ENCODE measurements at regions of chr11 and their contacts with region 1.

Region 1: DNA sequence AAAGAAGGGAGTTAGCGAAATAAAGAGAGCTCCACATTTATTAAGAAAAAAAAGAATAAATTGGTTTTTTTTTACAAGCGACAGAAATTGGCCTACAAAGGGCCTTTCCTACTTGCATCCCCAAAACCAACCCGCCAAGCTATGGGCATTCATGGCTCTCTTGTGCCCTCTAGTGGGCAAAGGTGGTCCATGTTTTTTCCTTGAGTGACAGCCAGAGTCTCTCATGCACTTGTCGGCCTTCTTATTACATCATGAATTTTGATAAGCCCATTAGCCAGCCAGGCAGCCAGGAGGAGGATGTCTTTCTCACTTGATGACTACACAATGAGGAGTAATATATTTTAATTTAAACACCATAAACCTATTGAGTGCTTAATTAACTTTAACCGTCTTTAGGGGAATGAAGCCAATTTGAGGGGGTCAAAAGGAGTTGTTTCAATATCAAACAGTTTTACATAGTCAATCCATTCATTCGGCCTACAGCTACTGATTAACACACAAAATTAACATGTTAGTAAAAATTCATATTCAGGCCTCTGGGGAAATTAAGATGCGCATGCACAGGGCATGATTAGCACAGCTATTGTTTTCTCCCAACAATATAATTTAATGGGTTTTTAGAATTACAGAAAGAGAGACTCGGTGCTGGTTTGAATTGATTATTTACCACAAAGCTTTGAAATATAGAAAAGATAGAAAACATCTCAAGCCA is 85.5 kb downstream of the RCN1 start:
- DNase-seq: peak; percentile 76
- ATAC-seq: peak; percentile 62; the same call in 1 of the 2 replicates
- H3K4me3 ChIP-seq: no peak overlapping the region
- H3K27ac ChIP-seq: no peak overlapping the region
- H3K4me1 ChIP-seq: no peaks in the 10 kb centered on the region
- H3K27me3 ChIP-seq: peaks cover 11% of the 10 kb centered on the region
- CTCF ChIP-seq: peak; percentile 96
- POLR2A ChIP-seq: no peak
- RAD21 ChIP-seq: peak; percentile 95

Region 2: GRCh38 chr11:31107062-31107461 is 1069.3 kb before region 1 on chr11:
- CTCF ChIA-PET with region 1: interaction called, 3 read pairs
- POLR2A ChIA-PET with region 1: no interaction called
- dilution Hi-C with region 1: no loop called
- in situ Hi-C with region 1: no loop called
- intact Hi-C with region 1: loop called (anchors 5 kb)
- DNase-seq: peak; percentile 7
- ATAC-seq: peak; percentile 46; the same call in 1 of the 2 replicates
- H3K4me3 ChIP-seq: no peak overlapping the region
- H3K27ac ChIP-seq: no peak overlapping the region
- H3K4me1 ChIP-seq: no peaks in the 10 kb centered on the region
- H3K27me3 ChIP-seq: no peaks in the 10 kb centered on the region
- CTCF ChIP-seq: peak; percentile 49
- POLR2A ChIP-seq: no peak
- RAD21 ChIP-seq: peak; percentile 58

Region 3: DNA sequence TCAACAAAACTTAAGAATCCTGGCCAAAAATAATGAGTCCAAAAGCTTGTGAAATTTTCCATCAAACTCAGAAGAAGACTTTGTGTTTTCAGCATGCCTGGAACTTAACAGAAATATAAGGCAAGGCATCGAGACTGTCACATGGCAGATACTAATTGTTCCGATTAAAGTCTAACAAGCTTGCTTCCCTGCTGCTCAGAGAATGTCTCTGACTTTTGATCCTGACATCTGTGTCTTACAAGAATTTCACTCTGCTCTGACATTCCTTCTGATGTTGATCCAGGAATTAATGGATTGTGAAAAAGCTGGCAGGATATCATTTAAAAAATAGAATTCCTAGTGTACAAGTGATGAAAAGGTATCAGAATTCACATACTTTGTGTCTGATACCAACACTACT is 977.0 kb before region 1 on chr11:
- CTCF ChIA-PET with region 1: no interaction called
- POLR2A ChIA-PET with region 1: no interaction called
- dilution Hi-C with region 1: no loop called
- in situ Hi-C with region 1: no loop called
- intact Hi-C with region 1: no loop called
- DNase-seq: no peak
- ATAC-seq: no peak
- H3K4me3 ChIP-seq: no peak overlapping the region
- H3K27ac ChIP-seq: no peak overlapping the region
- H3K4me1 ChIP-seq: no peaks in the 10 kb centered on the region
- H3K27me3 ChIP-seq: no peaks in the 10 kb centered on the region
- CTCF ChIP-seq: no peak
- POLR2A ChIP-seq: no peak
- RAD21 ChIP-seq: no peak

Region 4: DNA sequence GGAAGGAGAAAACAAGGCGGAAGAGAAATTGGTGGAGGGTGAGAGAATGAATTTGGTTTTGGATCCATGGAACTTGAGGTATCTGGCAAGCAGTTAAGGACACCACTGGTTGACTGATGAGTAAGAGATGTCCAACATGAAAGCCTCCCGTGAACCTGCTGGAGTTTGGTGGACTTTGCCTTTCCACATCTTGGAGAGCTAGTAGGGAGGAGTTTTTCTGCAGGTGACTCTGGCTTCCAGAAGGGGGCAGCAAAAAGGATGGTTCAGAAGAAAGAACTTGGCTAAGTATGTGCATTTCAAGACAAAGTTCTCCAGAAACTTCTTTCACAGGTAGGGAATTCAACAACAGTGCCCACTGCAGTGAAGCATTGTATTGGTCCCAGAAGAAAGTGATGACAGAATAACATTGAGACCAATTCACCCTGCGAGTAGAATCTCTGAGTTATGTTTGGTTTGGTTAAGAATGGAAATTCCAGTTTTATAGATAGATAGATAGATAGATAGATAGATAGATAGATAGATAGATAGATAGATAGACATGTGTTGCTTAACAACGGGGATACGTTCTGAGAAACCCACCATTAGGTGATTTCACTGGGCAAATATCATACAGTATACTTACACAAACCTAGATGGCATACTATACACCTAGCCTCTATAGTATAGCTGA is 835.3 kb before region 1 on chr11:
- CTCF ChIA-PET with region 1: interaction called, 8 read pairs
- POLR2A ChIA-PET with region 1: no interaction called
- dilution Hi-C with region 1: no loop called
- in situ Hi-C with region 1: no loop called
- intact Hi-C with region 1: loop called (anchors 2 kb)
- DNase-seq: peak; percentile 41
- ATAC-seq: peak; percentile 46; the same call in 1 of the 2 replicates
- H3K4me3 ChIP-seq: no peak overlapping the region
- H3K27ac ChIP-seq: no peak overlapping the region
- H3K4me1 ChIP-seq: no peaks in the 10 kb centered on the region
- H3K27me3 ChIP-seq: no peaks in the 10 kb centered on the region
- CTCF ChIP-seq: peak; percentile 55
- POLR2A ChIP-seq: no peak
- RAD21 ChIP-seq: peak; percentile 45

Region 5: DNA sequence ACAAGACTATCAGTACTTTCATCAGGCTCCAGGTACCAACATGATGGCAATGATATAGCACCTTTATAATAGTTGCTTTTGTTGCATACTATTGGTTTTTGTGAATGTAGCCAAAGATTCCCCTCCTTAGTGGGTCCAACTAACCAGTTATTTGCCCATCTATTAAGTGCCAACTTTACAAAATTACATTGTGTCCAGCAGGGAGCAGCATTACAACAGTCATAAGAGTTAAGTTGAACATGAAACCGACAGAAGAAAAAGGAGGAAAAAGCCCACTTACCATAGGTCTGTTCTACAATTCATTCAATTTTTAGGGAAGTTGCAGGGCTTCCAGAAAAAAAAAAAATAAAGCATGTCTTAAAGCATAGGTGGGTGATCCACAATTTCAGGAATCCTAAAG is 688.5 kb before region 1 on chr11:
- CTCF ChIA-PET with region 1: no interaction called
- POLR2A ChIA-PET with region 1: no interaction called
- dilution Hi-C with region 1: no loop called
- in situ Hi-C with region 1: no loop called
- intact Hi-C with region 1: loop called (anchors 5 kb)
- DNase-seq: peak; percentile 73
- ATAC-seq: peak; percentile 82
- H3K4me3 ChIP-seq: no peak overlapping the region
- H3K27ac ChIP-seq: no peak overlapping the region
- H3K4me1 ChIP-seq: no peaks in the 10 kb centered on the region
- H3K27me3 ChIP-seq: no peaks in the 10 kb centered on the region
- CTCF ChIP-seq: peak; percentile 60
- POLR2A ChIP-seq: no peak
- RAD21 ChIP-seq: peak; percentile 63

Region 6: GRCh38 chr11:31870609-31871309 is 305.6 kb before region 1 on chr11:
- CTCF ChIA-PET with region 1: interaction called, 3 read pairs
- POLR2A ChIA-PET with region 1: no interaction called
- dilution Hi-C with region 1: no loop called
- in situ Hi-C with region 1: no loop called
- intact Hi-C with region 1: loop called (anchors 10 kb)
- DNase-seq: peak; percentile 33
- ATAC-seq: peak; percentile 82
- H3K4me3 ChIP-seq: no peak overlapping the region
- H3K27ac ChIP-seq: no peak overlapping the region
- H3K4me1 ChIP-seq: no peaks in the 10 kb centered on the region
- H3K27me3 ChIP-seq: peaks cover 14% of the 10 kb centered on the region
- CTCF ChIP-seq: peak; percentile 71
- POLR2A ChIP-seq: no peak
- RAD21 ChIP-seq: peak; percentile 82

Region 7: DNA sequence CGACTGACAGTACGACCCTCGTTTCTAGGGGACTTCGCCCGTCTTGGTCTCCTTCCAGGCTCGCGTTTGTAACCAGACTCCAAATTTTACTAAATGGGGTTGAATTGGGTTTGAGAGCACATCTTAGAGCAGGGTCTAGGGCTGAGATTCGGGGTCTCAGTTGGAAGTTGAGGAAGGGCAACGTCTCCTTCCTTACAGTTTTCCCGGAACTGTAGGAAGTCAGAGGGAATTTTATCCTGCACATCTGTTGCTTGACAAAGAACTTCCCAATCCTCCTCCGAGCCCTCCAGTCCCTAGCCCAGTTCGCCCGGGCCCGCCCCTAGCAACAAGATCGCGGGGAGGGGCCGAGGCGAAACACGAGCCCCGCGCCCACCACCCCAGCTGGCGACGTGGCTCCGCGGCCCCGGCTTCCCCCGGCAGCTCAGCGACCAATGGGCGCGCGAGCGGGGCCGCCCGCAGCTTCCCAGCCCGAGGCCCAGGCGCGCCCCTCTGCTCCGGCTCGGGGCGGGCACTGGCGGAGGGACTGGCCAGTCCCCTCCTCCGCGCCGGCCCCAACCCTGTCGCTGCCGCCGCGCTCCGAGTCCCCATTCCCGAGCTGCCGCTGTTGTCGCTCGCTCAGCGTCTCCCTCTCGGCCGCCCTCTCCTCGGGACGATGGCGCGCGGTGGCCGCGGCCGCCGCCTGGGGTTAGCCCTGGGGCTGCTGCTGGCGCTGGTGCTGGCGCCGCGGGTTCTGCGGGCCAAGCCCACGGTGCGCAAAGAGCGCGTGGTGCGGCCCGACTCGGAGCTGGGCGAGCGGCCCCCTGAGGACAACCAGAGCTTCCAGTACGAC is 85.6 kb before region 1 on chr11 and contains the start of gene RCN1:
- CTCF ChIA-PET with region 1: no interaction called
- POLR2A ChIA-PET with region 1: no interaction called
- dilution Hi-C with region 1: no loop called
- in situ Hi-C with region 1: no loop called
- intact Hi-C with region 1: loop called (anchors 2 kb)
- DNase-seq: peak; percentile 86
- ATAC-seq: peak; percentile 85
- H3K4me3 ChIP-seq: peak within 1 kb of the TSS; percentile 96
- H3K27ac ChIP-seq: peak within 1 kb of the TSS; percentile 99
- H3K4me1 ChIP-seq: peaks cover 30% of the 10 kb centered on the region
- H3K27me3 ChIP-seq: no peaks in the 10 kb centered on the region
- CTCF ChIP-seq: no peak
- POLR2A ChIP-seq: peak; percentile 83
- RAD21 ChIP-seq: no peak
- total RNA-seq, gene RCN1: 129 and 231 TPM in 2 replicates

Measured in IMR-90 (cell line).